Panc1 (cell line): ENCODE measurements at regions of chr14 and their contacts with region 1.

Region 1: DNA sequence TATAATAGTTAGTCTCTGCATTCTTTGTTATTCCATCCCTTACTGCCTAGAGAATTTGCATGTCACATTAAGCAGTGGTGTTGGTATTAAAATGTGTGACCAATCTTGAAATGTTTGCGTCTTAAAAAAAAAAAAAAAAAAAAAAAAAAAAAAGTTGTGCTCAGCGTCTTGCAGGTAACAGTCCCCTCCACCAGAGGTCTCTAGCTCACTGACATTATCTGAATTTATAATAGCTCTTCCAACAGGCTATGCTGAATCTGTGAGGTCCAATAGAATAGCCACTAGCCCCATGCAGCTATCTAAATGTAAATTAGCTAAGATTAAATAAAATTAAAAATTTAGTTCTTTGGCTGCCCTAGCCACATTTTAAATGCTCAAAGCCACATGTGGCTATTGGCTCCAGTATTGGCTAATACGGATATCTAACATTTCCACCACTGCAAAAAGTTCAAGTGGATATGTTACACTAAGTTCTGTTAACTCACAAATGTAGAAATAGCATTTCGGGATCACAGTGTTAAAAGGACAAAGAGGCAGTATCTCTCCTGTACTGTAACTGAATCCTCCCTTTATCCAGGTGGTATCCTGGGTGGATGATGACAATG is 28.7 kb downstream of the NKX2-8 start:
- DNase-seq: peak; percentile 30
- ATAC-seq: no peak
- H3K4me3 ChIP-seq: no peak overlapping the region
- H3K27ac ChIP-seq: no peak overlapping the region
- H3K4me1 ChIP-seq: no peaks in the 10 kb centered on the region
- H3K27me3 ChIP-seq: no peaks in the 10 kb centered on the region
- CTCF ChIP-seq: peak; percentile 67; the same call in 1 of the 2 replicates

Region 2: GRCh38 chr14:36373982-36374673 is 179.6 kb before region 1 on chr14:
- CTCF ChIA-PET with region 1: no interaction called
- POLR2A ChIA-PET with region 1: no interaction called
- in situ Hi-C with region 1: no loop called
- intact Hi-C with region 1: loop called (anchors 10 kb)
- DNase-seq: peak; percentile 41
- ATAC-seq: peak; percentile 82
- H3K4me3 ChIP-seq: no peak overlapping the region
- H3K27ac ChIP-seq: no peak overlapping the region
- H3K4me1 ChIP-seq: no peaks in the 10 kb centered on the region
- H3K27me3 ChIP-seq: no peaks in the 10 kb centered on the region
- CTCF ChIP-seq: peak; percentile 84

Region 3: GRCh38 chr14:36524874-36525745 is 28.6 kb before region 1 on chr14:
- CTCF ChIA-PET with region 1: interaction called, 10 read pairs
- POLR2A ChIA-PET with region 1: no interaction called
- in situ Hi-C with region 1: no loop called
- intact Hi-C with region 1: no loop called
- DNase-seq: no peak
- ATAC-seq: no peak
- H3K4me3 ChIP-seq: no peak overlapping the region
- H3K27ac ChIP-seq: no peak overlapping the region
- H3K4me1 ChIP-seq: no peaks in the 10 kb centered on the region; the same call in 1 of the 2 replicates
- H3K27me3 ChIP-seq: peaks cover 10% of the 10 kb centered on the region
- CTCF ChIP-seq: peak; percentile 77

Region 4: GRCh38 chr14:36538051-36538450 is 15.7 kb before region 1 on chr14:
- CTCF ChIA-PET with region 1: interaction called, 10 read pairs
- POLR2A ChIA-PET with region 1: no interaction called
- in situ Hi-C with region 1: no loop called
- intact Hi-C with region 1: no loop called
- DNase-seq: no peak
- ATAC-seq: no peak
- H3K4me3 ChIP-seq: no peak overlapping the region
- H3K27ac ChIP-seq: no peak overlapping the region
- H3K4me1 ChIP-seq: no peaks in the 10 kb centered on the region
- H3K27me3 ChIP-seq: no peaks in the 10 kb centered on the region
- CTCF ChIP-seq: no peak

Region 5: GRCh38 chr14:36604757-36605505 is 51.2 kb after region 1 on chr14:
- CTCF ChIA-PET with region 1: interaction called, 18 read pairs
- POLR2A ChIA-PET with region 1: interaction called, 14 read pairs
- in situ Hi-C with region 1: no loop called
- intact Hi-C with region 1: loop called (anchors 2 kb)
- DNase-seq: peak; percentile 55
- ATAC-seq: peak; percentile 72
- H3K4me3 ChIP-seq: no peak overlapping the region
- H3K27ac ChIP-seq: no peak overlapping the region
- H3K4me1 ChIP-seq: no peaks in the 10 kb centered on the region
- H3K27me3 ChIP-seq: 0 out of 2 replicates have a peak, but pooled peaks cover 2% of the 10 kb centered on the region
- CTCF ChIP-seq: peak; percentile 76

Region 6: DNA sequence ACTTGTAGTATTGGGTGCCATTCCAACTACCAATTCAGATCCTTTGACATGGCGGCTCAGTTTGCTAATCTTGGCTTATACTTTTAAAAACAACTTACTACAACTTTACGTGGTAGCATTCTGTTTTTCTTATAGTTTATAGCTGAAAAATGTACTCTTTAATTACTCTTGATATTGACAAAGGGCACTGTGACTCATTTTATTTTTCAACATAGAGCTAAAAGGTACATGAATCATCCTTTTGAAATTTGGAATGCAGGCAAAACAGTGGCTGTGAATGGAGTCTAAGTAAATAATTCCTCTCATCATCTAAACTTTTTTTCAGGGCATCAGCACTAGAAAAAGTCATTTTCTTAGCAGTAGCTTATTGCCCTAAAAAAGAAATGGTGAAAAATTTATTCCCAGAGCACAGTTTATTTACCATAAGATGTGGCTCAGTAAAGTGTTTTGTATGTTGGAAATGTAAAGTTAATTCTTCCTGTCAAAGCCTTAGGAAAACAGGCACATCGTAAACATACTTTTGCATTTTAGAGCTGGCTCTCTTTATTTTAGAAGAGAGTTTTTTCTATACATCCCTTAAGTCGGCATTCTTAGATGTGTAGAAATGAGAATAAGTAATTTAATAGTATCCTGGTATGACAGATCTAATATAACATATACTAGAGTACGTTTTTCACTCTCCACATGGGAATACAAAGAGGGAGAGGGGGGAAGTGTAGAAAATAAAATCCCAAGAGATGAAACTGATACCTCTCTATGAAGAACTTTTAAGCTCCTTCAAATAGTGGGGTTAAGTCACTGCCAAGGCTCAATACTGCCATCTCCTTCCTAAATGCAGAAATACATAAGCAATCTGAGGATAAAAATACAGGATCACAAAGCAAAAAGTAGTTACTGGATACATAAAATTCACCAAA is 563.4 kb after region 1 on chr14:
- CTCF ChIA-PET with region 1: interaction called, 9 read pairs
- POLR2A ChIA-PET with region 1: interaction called, 15 read pairs
- in situ Hi-C with region 1: no loop called
- intact Hi-C with region 1: no loop called
- DNase-seq: peak; percentile 59
- ATAC-seq: peak; percentile 91
- H3K4me3 ChIP-seq: no peak overlapping the region
- H3K27ac ChIP-seq: peak overlapping the region; percentile 69; the same call in 1 of the 2 replicates
- H3K4me1 ChIP-seq: peaks cover 2% of the 10 kb centered on the region
- H3K27me3 ChIP-seq: no peaks in the 10 kb centered on the region
- CTCF ChIP-seq: peak; percentile 61; the same call in 1 of the 2 replicates

Region 7: GRCh38 chr14:37150414-37150813 is 596.7 kb after region 1 on chr14:
- CTCF ChIA-PET with region 1: interaction called, 4 read pairs
- POLR2A ChIA-PET with region 1: interaction called, 22 read pairs
- in situ Hi-C with region 1: no loop called
- intact Hi-C with region 1: loop called (anchors 5 kb)
- DNase-seq: no peak
- ATAC-seq: no peak
- H3K4me3 ChIP-seq: no peak overlapping the region
- H3K27ac ChIP-seq: no peak overlapping the region
- H3K4me1 ChIP-seq: no peaks in the 10 kb centered on the region
- H3K27me3 ChIP-seq: no peaks in the 10 kb centered on the region
- CTCF ChIP-seq: peak; percentile 63; the same call in 1 of the 2 replicates